B cell (primary cell): ENCODE measurements at regions of chr17 and their contacts with region 1.

Region 1: GRCh38 chr17:3710951-3711383 is 12.7 kb upstream of the HASPIN start:
- DNase-seq: peak; percentile 95
- ATAC-seq: peak; percentile 92
- H3K4me3 ChIP-seq: peak overlapping the region in 4 of 5 experiments; percentile 11 to 54 (median 35)
- H3K4me3 Mint-ChIP-seq: peak overlapping the region; percentile 85
- H3K27ac ChIP-seq: peak overlapping the region; percentile 60 to 82
- H3K27ac Mint-ChIP-seq: peak overlapping the region; percentile 96
- H3K4me1 ChIP-seq: peaks cover 38 to 54% of the 10 kb centered on the region in 2 donors
- H3K4me1 Mint-ChIP-seq: peaks cover 57% of the 10 kb centered on the region
- H3K27me3 ChIP-seq: no peaks in the 10 kb centered on the region
- H3K27me3 Mint-ChIP-seq: no peaks in the 10 kb centered on the region
- CTCF ChIP-seq: no peak

Region 2: GRCh38 chr17:3668279-3669085 is 42.5 kb before region 1 on chr17 and contains the starts of genes EMC6 and TAX1BP3:
- CTCF ChIA-PET with region 1: no interaction called
- POLR2A ChIA-PET with region 1: no interaction called
- intact Hi-C with region 1: no loop called
- DNase-seq: peak; percentile 99
- ATAC-seq: peak; percentile 90
- H3K4me3 ChIP-seq: peak within 1 kb of the TSS; percentile 60 to 99 (median 98)
- H3K4me3 Mint-ChIP-seq: peak within 1 kb of the TSS; percentile 96
- H3K27ac ChIP-seq: peak within 1 kb of the TSS; percentile 74 to 86
- H3K27ac Mint-ChIP-seq: peak within 1 kb of the TSS; percentile 94
- H3K4me1 ChIP-seq: peaks cover 11 to 21% of the 10 kb centered on the region in 2 donors
- H3K4me1 Mint-ChIP-seq: peaks cover 33% of the 10 kb centered on the region
- H3K27me3 ChIP-seq: no peaks in the 10 kb centered on the region
- H3K27me3 Mint-ChIP-seq: no peaks in the 10 kb centered on the region
- CTCF ChIP-seq: no peak
- total RNA-seq, gene EMC6: 23.4 and 26.6 TPM in 2 replicates
- total RNA-seq, gene TAX1BP3: 17.1 and 17.7 TPM in 2 replicates

Region 3: DNA sequence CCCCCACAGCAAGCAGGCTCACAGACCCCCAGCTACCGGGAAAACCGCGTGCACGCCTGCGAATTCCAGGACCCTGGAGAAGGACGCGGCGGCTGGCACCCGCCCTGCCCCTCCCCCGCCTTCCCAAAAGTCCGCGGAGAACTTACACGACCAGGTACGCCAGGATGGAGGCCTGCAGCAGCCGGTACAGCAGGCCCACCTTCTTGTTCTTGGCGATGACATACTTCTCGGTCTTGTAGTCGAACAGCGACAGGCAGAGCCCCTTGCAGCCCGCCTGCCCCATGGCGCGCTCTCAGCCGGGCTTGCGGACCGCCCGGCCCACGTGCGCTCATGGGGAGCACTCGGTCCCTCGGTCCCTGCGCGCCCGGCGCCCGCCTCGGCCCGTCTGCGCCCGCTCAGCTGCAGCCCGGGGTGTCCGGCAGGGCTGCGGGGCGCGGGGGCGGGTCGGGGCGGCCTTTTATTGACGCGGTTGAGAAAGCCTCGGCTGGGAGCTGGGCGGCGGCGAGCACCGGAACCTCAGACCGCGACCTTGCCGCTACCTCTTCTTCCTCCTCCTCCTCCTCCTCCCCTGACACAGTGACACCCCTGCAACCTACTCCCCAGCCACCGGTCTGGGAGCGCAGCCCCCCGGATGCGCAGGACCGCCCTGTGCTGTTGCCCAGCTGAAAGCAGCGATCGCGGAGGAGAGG is 15.1 kb before region 1 on chr17 and contains the start of gene P2RX5:
- CTCF ChIA-PET with region 1: interaction called, 36 read pairs
- POLR2A ChIA-PET with region 1: interaction called, 63 read pairs
- intact Hi-C with region 1: loop called (anchors 1 kb)
- DNase-seq: peak; percentile 80
- ATAC-seq: peak; percentile 52
- H3K4me3 ChIP-seq: peak within 1 kb of the TSS; percentile 58 to 93 (median 83)
- H3K4me3 Mint-ChIP-seq: peak within 1 kb of the TSS; percentile 100
- H3K27ac ChIP-seq: peak within 1 kb of the TSS; percentile 76 to 91
- H3K27ac Mint-ChIP-seq: peak within 1 kb of the TSS; percentile 99
- H3K4me1 ChIP-seq: peaks cover 35 to 65% of the 10 kb centered on the region in 2 donors
- H3K4me1 Mint-ChIP-seq: peaks cover 61% of the 10 kb centered on the region
- H3K27me3 ChIP-seq: no peaks in the 10 kb centered on the region
- H3K27me3 Mint-ChIP-seq: no peaks in the 10 kb centered on the region
- CTCF ChIP-seq: no peak
- total RNA-seq, gene P2RX5: 405 and 410 TPM in 2 replicates